ENCODE measurements at regions of chr5 and their contacts with region 1.

Region 1: GRCh38 chr5:77993855-77994318 is 217.7 kb upstream of the TBCA start:
- DNase-seq: no peak
- H3K4me3 ChIP-seq: no peak overlapping the region
- H3K27ac ChIP-seq: no peak overlapping the region
- H3K4me1 ChIP-seq: no peaks in the 10 kb centered on the region
- H3K27me3 ChIP-seq: no peaks in the 10 kb centered on the region
- CTCF ChIP-seq: no peak
- POLR2A ChIP-seq: no peak

Region 2: DNA sequence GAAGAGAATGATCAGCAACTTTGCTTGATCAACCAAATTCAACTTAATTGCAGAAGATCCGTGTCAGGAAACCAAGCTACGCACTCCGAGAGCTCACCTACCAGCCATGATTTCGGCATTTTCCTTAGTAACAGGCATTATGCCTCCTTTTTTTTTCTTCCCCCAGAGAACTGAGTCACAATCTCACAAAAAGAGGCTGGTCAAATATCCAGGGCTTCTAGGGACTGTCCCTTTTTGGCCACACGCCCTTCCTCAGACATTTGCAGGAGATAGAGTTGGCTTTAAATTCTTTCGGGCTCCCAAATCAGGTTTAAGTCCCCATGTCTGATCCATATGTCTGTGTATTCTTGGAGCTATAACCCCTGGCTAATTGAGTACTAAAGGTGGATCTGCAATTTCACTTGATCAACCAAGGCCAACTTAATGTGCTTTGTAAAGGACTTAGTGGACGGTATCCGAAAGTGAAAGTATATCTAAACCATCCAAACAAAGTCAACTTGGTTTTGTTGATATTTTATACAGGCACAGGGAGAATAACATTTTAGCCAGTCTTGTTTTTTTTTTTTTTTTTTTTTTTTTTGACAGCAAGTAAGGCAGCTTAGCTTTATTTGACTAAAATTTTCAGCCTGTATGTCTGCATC is 116.9 kb before region 1 on chr5:
- intact Hi-C with region 1: loop called in 1 of 2 experiments (anchors 10 kb)
- DNase-seq: peak in 2 of 7 donors; percentile 16 to 29
- H3K4me3 ChIP-seq: no peak overlapping the region
- H3K27ac ChIP-seq: no peak overlapping the region
- H3K4me1 ChIP-seq: no peaks in the 10 kb centered on the region
- H3K27me3 ChIP-seq: no peaks in the 10 kb centered on the region
- CTCF ChIP-seq: no peak
- POLR2A ChIP-seq: no peak

Region 3: GRCh38 chr5:77893225-77893860 is 100.5 kb before region 1 on chr5:
- intact Hi-C with region 1: no loop called
- DNase-seq: peak; percentile 45 to 89 (median 78)
- H3K4me3 ChIP-seq: no peak overlapping the region
- H3K27ac ChIP-seq: peak overlapping the region in 2 of 5 donors; percentile 43 to 60
- H3K4me1 ChIP-seq: no peaks in the 10 kb centered on the region
- H3K27me3 ChIP-seq: no peaks in the 10 kb centered on the region
- CTCF ChIP-seq: no peak
- POLR2A ChIP-seq: no peak

Region 4: DNA sequence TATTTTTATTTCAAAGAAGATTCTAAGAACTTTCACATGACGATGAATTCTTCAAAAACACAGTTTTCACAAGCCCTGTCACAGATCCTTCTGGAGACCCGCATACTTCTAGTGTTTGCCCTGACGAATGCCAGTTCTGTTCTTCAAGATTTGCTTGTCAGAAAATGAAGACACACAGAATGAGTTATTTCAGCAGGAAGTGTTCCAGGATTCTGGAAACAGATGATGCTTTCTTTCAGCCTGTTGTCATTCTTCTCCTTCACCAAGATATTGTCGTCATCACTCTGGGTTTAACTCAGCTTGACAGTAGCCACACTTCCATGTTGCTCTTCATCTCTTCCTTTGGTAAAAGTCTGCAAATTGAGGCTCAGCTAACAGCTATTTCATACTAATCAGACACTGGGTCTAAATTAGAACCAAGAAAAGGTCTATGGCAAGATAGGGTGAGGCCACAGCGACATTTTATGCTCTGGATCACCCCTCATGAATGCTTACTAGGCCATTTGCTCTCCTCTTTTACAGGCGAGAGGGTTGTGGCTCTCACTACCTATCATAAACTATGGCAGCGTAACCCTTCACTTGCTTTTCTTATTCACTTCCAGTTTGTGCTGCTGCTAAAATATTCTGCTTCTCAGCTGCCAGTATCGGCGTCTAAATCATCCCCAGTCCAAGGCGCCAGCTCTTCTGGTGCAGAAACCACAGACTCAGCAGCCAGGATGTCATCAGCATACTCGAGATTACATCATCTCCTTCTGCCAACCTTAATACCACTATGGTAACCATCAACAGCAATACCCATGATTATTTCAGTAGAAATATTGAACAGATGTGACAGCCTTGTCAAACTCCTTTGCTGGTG is 58.2 kb before region 1 on chr5:
- intact Hi-C with region 1: no loop called
- DNase-seq: no peak
- H3K4me3 ChIP-seq: no peak overlapping the region
- H3K27ac ChIP-seq: no peak overlapping the region
- H3K4me1 ChIP-seq: no peaks in the 10 kb centered on the region
- H3K27me3 ChIP-seq: no peaks in the 10 kb centered on the region
- CTCF ChIP-seq: no peak
- POLR2A ChIP-seq: no peak